MCF 10A (cell line): ENCODE measurements at regions of chr3 and their contacts with region 1.

Region 1: DNA sequence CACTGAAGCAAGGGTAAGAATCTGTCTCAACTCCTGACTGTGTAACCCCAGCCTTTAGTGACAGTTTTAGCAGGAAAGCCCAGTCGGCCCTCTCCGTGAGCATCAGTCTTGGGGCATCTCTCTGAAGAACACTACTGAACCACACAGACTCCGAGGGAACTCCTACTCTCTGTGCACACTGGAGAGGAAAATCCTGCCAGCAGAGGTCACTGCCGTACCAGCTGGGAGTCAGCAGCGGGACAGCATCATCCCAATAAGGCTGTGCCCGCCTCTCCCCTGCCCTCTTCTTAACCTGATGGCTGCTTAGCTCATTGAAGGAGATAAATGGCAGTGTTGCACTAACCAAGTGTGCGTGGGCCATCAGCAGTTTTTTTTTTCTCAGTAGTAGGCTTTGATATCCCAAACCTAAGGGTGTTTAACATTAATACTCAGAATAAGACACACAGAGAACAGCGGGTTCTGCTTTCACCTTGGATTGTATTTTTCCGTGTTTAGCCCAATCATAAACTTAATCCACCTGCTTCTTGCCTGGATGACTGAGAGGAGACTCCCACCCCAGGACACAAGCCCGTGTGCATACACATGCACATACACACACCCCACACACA is 26.6 kb upstream of the RASA2 start:
- DNase-seq: peak; percentile 88
- H3K4me3 Mint-ChIP-seq: no peak overlapping the region
- H3K27ac Mint-ChIP-seq: no peak overlapping the region
- H3K4me1 Mint-ChIP-seq: no peaks in the 10 kb centered on the region
- H3K27me3 Mint-ChIP-seq: no peaks in the 10 kb centered on the region
- CTCF ChIP-seq: peak; percentile 89

Region 2: GRCh38 chr3:141050576-141051442 is 409.4 kb before region 1 on chr3 and contains the start of gene SPSB4:
- CTCF ChIA-PET with region 1: no interaction called
- POLR2A ChIA-PET with region 1: no interaction called
- intact Hi-C with region 1: no loop called
- DNase-seq: peak; percentile 56
- H3K4me3 Mint-ChIP-seq: peak within 1 kb of the TSS; percentile 57
- H3K27ac Mint-ChIP-seq: no peak within 1 kb of the TSS
- H3K4me1 Mint-ChIP-seq: peaks cover 11% of the 10 kb centered on the region
- H3K27me3 Mint-ChIP-seq: peaks cover 61% of the 10 kb centered on the region
- CTCF ChIP-seq: peak; percentile 16
- total RNA-seq, gene SPSB4: not detected in 2 replicates

Region 3: GRCh38 chr3:141266797-141267555 is 193.2 kb before region 1 on chr3:
- CTCF ChIA-PET with region 1: no interaction called
- POLR2A ChIA-PET with region 1: no interaction called
- intact Hi-C with region 1: no loop called
- DNase-seq: no peak
- H3K4me3 Mint-ChIP-seq: no peak overlapping the region
- H3K27ac Mint-ChIP-seq: no peak overlapping the region
- H3K4me1 Mint-ChIP-seq: no peaks in the 10 kb centered on the region
- H3K27me3 Mint-ChIP-seq: no peaks in the 10 kb centered on the region
- CTCF ChIP-seq: no peak

Region 4: GRCh38 chr3:141311496-141312353 is 148.5 kb before region 1 on chr3:
- CTCF ChIA-PET with region 1: interaction called, 392 read pairs
- POLR2A ChIA-PET with region 1: interaction called, 7 read pairs
- intact Hi-C with region 1: loop called (anchors 1 kb)
- DNase-seq: peak; percentile 98
- H3K4me3 Mint-ChIP-seq: peak overlapping the region; percentile 86
- H3K27ac Mint-ChIP-seq: peak overlapping the region; percentile 85
- H3K4me1 Mint-ChIP-seq: peaks cover 7% of the 10 kb centered on the region
- H3K27me3 Mint-ChIP-seq: no peaks in the 10 kb centered on the region
- CTCF ChIP-seq: peak; percentile 61

Region 5: GRCh38 chr3:141471160-141471559 is 11.0 kb after region 1 on chr3:
- CTCF ChIA-PET with region 1: interaction called, 40 read pairs
- POLR2A ChIA-PET with region 1: interaction called, 4 read pairs
- intact Hi-C with region 1: no loop called
- DNase-seq: no peak
- H3K4me3 Mint-ChIP-seq: no peak overlapping the region
- H3K27ac Mint-ChIP-seq: no peak overlapping the region
- H3K4me1 Mint-ChIP-seq: no peaks in the 10 kb centered on the region
- H3K27me3 Mint-ChIP-seq: no peaks in the 10 kb centered on the region
- CTCF ChIP-seq: no peak

Region 6: GRCh38 chr3:141514382-141514781 is 54.2 kb after region 1 on chr3:
- CTCF ChIA-PET with region 1: interaction called, 16 read pairs
- POLR2A ChIA-PET with region 1: no interaction called
- intact Hi-C with region 1: no loop called
- DNase-seq: no peak
- H3K4me3 Mint-ChIP-seq: no peak overlapping the region
- H3K27ac Mint-ChIP-seq: no peak overlapping the region
- H3K4me1 Mint-ChIP-seq: peaks cover 18% of the 10 kb centered on the region
- H3K27me3 Mint-ChIP-seq: no peaks in the 10 kb centered on the region
- CTCF ChIP-seq: no peak

Region 7: GRCh38 chr3:141561426-141562034 is 101.3 kb after region 1 on chr3:
- CTCF ChIA-PET with region 1: interaction called, 342 read pairs
- POLR2A ChIA-PET with region 1: interaction called, 16 read pairs
- intact Hi-C with region 1: loop called (anchors 1 kb)
- DNase-seq: peak; percentile 64
- H3K4me3 Mint-ChIP-seq: no peak overlapping the region
- H3K27ac Mint-ChIP-seq: no peak overlapping the region
- H3K4me1 Mint-ChIP-seq: no peaks in the 10 kb centered on the region
- H3K27me3 Mint-ChIP-seq: no peaks in the 10 kb centered on the region
- CTCF ChIP-seq: peak; percentile 88

Region 8: DNA sequence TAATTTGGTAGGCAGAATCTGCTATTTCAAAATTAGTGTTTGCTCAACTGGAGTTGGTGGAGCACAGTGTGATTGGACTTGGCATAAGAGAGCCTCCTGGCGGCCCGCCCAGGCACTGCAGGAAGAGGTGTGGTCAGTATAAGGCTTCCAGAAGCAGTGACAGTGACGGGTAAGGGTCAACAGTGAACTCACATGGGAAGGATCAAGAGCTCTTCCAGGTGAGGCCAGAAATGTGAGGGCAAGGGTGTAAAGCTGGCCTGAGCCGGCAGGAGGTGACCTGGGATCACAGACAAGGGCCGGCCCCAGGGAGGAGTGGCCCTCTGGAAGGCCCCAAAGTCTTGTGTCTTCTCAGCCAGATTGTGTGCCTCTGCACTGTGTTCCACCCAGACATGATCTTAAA is 184.7 kb after region 1 on chr3:
- CTCF ChIA-PET with region 1: no interaction called
- POLR2A ChIA-PET with region 1: no interaction called
- intact Hi-C with region 1: loop called (anchors 1 kb)
- DNase-seq: peak; percentile 76
- H3K4me3 Mint-ChIP-seq: no peak overlapping the region
- H3K27ac Mint-ChIP-seq: no peak overlapping the region
- H3K4me1 Mint-ChIP-seq: peaks cover 6% of the 10 kb centered on the region
- H3K27me3 Mint-ChIP-seq: no peaks in the 10 kb centered on the region
- CTCF ChIP-seq: peak; percentile 75

Region 9: GRCh38 chr3:141875374-141875892 is 415.2 kb after region 1 on chr3:
- CTCF ChIA-PET with region 1: no interaction called
- POLR2A ChIA-PET with region 1: no interaction called
- intact Hi-C with region 1: loop called (anchors 1 kb)
- DNase-seq: peak; percentile 86
- H3K4me3 Mint-ChIP-seq: peak overlapping the region; percentile 91
- H3K27ac Mint-ChIP-seq: peak overlapping the region; percentile 83
- H3K4me1 Mint-ChIP-seq: peaks cover 14% of the 10 kb centered on the region
- H3K27me3 Mint-ChIP-seq: no peaks in the 10 kb centered on the region
- CTCF ChIP-seq: peak; percentile 87

Region 10: DNA sequence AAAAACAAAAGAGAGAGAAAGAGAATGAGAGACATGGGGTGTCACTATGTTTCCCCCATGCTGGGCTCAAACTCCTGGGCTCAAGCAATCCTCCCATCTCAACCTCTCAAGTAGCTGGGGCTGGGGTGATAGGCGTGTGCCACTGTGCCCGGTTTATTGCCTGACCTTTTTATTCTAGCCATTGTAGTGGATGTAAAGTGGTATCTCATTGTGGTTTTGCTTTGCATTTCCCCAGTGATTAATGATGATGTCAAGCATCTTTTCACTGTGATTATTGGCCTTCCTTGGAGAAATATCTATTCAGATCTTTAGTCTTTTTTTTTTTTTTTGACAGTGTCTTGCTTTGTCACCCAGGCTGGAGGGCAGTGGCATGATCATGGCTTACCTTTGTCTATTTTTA is 802.9 kb after region 1 on chr3:
- CTCF ChIA-PET with region 1: no interaction called
- POLR2A ChIA-PET with region 1: no interaction called
- intact Hi-C with region 1: no loop called
- DNase-seq: no peak
- H3K4me3 Mint-ChIP-seq: no peak overlapping the region
- H3K27ac Mint-ChIP-seq: no peak overlapping the region
- H3K4me1 Mint-ChIP-seq: no peaks in the 10 kb centered on the region
- H3K27me3 Mint-ChIP-seq: no peaks in the 10 kb centered on the region
- CTCF ChIP-seq: no peak